OCI-LY7 (cell line): ENCODE measurements at regions of chr4 and their contacts with region 1.

Region 1: GRCh38 chr4:130056286-130056685 is 960.3 kb downstream of the C4orf33 start:
- DNase-seq: no peak
- H3K4me3 ChIP-seq: no peak overlapping the region
- H3K27ac ChIP-seq: no peak overlapping the region
- H3K4me1 ChIP-seq: no peaks in the 10 kb centered on the region
- CTCF ChIP-seq: no peak

Region 2: DNA sequence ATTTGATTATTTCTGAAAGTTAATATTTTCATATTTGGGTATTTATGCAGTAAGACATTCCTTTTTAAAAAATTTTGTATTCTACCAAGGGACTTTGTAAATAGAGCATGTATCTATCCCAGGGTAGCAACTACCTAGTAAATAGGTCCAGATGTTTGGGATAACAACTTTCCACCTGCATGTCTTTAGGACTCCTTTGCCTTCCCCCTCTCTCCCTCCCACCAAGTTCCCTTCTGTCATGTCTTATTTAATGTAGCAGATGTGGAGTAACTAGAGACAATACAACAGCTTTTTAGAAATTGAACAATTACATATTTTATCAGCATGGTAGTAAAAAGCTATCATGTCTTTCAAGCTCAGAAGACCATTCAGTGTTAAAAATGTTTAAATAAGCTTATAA is 139.3 kb before region 1 on chr4:
- CTCF ChIA-PET with region 1: no interaction called
- POLR2A ChIA-PET with region 1: no interaction called
- intact Hi-C with region 1: no loop called
- DNase-seq: no peak
- H3K4me3 ChIP-seq: no peak overlapping the region
- H3K27ac ChIP-seq: no peak overlapping the region
- H3K4me1 ChIP-seq: no peaks in the 10 kb centered on the region
- CTCF ChIP-seq: no peak

Region 3: DNA sequence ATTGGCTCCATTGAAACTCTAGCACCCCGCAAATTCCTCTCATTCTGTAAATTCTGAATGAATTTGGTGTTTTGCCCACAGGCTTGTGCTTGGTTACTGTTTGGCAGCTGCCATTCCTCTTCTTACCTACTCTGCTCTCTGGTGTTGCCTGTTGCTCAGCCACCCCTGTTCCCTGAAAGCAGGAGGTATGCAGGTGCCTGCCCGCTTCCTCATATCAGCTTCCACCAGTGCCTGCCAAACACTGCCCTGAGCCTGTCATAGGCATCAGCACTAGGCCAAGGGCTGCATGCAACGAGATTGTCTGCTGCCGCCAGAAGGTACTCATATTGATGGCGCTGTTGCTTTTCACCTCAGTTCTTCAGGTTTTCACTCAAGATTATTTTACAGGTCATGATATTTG is 17.8 kb after region 1 on chr4:
- CTCF ChIA-PET with region 1: no interaction called
- POLR2A ChIA-PET with region 1: no interaction called
- intact Hi-C with region 1: no loop called
- DNase-seq: no peak
- H3K4me3 ChIP-seq: no peak overlapping the region
- H3K27ac ChIP-seq: no peak overlapping the region
- H3K4me1 ChIP-seq: no peaks in the 10 kb centered on the region
- CTCF ChIP-seq: no peak

Region 4: DNA sequence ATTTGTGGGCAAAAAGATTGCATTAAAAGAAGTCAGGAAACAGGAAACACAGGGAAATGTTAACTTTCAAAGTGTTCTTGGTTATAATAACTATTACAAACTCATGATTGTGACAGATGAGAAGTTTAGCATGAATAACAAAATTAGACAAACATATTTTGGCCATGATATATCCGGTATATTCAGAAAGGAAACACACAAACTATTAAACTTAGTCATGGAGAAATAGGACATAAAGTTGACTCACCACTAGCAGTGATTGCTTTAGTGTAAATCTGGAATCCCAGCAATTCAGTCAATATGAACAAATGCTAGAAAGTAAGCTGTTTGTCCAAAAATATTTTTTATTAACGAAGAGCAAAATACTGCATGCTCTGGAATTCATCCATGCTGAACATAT is 339.6 kb after region 1 on chr4:
- CTCF ChIA-PET with region 1: no interaction called
- POLR2A ChIA-PET with region 1: interaction called, 10 read pairs
- intact Hi-C with region 1: no loop called
- DNase-seq: no peak
- H3K4me3 ChIP-seq: no peak overlapping the region
- H3K27ac ChIP-seq: no peak overlapping the region
- H3K4me1 ChIP-seq: no peaks in the 10 kb centered on the region
- CTCF ChIP-seq: no peak